Activated CD4-positive, alpha-beta memory T cell treated with anti-CD3 and anti-CD28 coated beads, Interleukin-2, amount 10 ng/mL, durations not matched to agents 7 days and 5 days (primary cell): ENCODE measurements at regions of chr15 and their contacts with region 1.

Region 1: DNA sequence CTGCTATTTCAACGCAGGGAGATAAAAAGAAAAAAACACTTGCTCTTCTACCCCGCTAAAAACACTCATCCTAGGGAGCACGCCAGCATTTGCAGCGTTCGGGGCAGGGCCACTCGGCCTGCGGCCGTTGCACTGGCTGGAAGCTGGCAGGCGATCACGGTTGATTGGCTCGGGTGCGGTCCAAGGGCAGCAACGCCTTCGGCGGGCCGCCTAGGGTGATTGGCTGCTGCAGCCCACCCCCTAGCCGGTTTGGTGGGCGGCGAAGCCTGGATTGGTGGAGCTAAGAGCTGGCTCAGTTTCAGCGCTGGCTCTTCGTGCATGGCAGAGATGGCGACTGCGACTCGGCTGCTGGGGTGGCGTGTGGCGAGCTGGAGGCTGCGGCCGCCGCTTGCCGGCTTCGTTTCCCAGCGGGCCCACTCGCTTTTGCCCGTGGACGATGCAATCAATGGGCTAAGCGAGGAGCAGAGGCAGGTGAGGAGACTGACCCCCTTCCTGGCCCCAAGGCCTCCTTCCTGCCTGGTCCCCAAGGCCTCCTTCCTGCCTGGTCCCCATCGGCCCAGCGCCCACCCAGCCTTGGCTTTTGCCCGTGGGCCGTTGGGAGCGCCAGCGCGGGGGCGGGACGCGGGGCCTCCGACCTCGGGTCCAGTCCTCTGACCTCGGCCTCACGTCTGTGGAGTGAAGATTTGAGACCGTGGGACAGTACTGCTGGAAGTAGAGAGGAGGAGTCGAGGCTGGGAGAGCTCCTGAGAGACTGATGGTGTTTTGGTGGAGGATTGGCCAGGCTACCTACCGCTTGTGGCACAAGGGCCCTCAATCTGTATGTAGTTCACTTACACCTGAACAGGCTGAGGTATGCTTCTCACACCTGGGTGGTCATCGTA is at the start of gene IVD:
- DNase-seq: peak; percentile 87
- H3K4me3 Mint-ChIP-seq: peak within 1 kb of the TSS; percentile 76
- H3K27ac Mint-ChIP-seq: peak within 1 kb of the TSS; percentile 81
- H3K4me1 Mint-ChIP-seq: peaks cover 57% of the 10 kb centered on the region
- H3K27me3 Mint-ChIP-seq: no peaks in the 10 kb centered on the region
- total RNA-seq, gene IVD: 38.1 to 38.4 TPM

Region 2: DNA sequence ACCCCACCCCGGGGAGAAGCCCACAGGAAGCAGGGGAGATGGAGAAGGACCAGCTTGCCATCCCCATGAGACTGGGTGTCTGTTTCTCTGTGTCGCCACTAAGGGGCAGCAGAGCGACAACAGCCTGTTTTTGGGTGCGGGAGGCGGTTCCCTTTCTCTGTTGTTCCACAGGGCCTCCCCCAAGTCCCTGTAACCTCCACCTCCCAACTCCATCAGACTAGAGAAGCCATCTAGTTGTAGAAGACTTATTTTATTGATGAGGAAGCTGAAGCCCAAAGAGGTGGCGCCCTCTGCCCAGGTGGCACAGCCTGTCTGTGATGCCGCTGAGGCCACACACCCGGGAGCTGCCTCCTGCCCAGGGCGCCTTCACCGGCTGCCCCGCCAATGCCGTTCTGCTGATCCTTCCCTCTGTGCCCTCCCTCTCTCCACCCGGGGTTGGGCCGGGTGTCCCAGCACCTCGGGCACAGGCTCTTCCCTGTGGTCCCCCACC is 61.1 kb before region 1 on chr15:
- CTCF ChIA-PET with region 1: interaction called, 11 read pairs
- POLR2A ChIA-PET with region 1: no interaction called
- DNase-seq: peak; percentile 77
- H3K4me3 Mint-ChIP-seq: no peak overlapping the region
- H3K27ac Mint-ChIP-seq: no peak overlapping the region
- H3K4me1 Mint-ChIP-seq: peaks cover 3% of the 10 kb centered on the region
- H3K27me3 Mint-ChIP-seq: no peaks in the 10 kb centered on the region

Region 3: GRCh38 chr15:40367686-40368611 is 37.8 kb before region 1 on chr15:
- CTCF ChIA-PET with region 1: interaction called, 17 read pairs
- POLR2A ChIA-PET with region 1: interaction called, 7 read pairs
- DNase-seq: peak; percentile 91
- H3K4me3 Mint-ChIP-seq: peak overlapping the region; percentile 77
- H3K27ac Mint-ChIP-seq: peak overlapping the region; percentile 56
- H3K4me1 Mint-ChIP-seq: peaks cover 20% of the 10 kb centered on the region
- H3K27me3 Mint-ChIP-seq: peaks cover 9% of the 10 kb centered on the region

Region 4: GRCh38 chr15:40382580-40383456 is 22.9 kb before region 1 on chr15 and contains the start of gene KNSTRN:
- CTCF ChIA-PET with region 1: no interaction called
- POLR2A ChIA-PET with region 1: interaction called, 41 read pairs
- DNase-seq: peak; percentile 94
- H3K4me3 Mint-ChIP-seq: peak within 1 kb of the TSS; percentile 98
- H3K27ac Mint-ChIP-seq: peak within 1 kb of the TSS; percentile 82
- H3K4me1 Mint-ChIP-seq: peaks cover 32% of the 10 kb centered on the region
- H3K27me3 Mint-ChIP-seq: peaks cover 5% of the 10 kb centered on the region
- total RNA-seq, gene KNSTRN: 54.2 to 54.3 TPM

Region 5: GRCh38 chr15:40421246-40422157 is 15.8 kb after region 1 on chr15:
- CTCF ChIA-PET with region 1: interaction called, 11 read pairs
- POLR2A ChIA-PET with region 1: interaction called, 5 read pairs
- DNase-seq: peak; percentile 84
- H3K4me3 Mint-ChIP-seq: no peak overlapping the region
- H3K27ac Mint-ChIP-seq: no peak overlapping the region
- H3K4me1 Mint-ChIP-seq: peaks cover 2% of the 10 kb centered on the region
- H3K27me3 Mint-ChIP-seq: peaks cover 1% of the 10 kb centered on the region